ENCODE measurements at regions of chr2 and their contacts with region 1.

Region 1: GRCh38 chr2:202196727-202197126 is 41.7 kb downstream of the SUMO1 start:
- DNase-seq: no peak
- H3K4me3 ChIP-seq: no peak overlapping the region
- H3K27ac ChIP-seq: no peak overlapping the region
- H3K4me1 ChIP-seq: no peaks in the 10 kb centered on the region
- H3K27me3 ChIP-seq: no peaks in the 10 kb centered on the region
- CTCF ChIP-seq: no peak
- POLR2A ChIP-seq: no peak

Region 2: DNA sequence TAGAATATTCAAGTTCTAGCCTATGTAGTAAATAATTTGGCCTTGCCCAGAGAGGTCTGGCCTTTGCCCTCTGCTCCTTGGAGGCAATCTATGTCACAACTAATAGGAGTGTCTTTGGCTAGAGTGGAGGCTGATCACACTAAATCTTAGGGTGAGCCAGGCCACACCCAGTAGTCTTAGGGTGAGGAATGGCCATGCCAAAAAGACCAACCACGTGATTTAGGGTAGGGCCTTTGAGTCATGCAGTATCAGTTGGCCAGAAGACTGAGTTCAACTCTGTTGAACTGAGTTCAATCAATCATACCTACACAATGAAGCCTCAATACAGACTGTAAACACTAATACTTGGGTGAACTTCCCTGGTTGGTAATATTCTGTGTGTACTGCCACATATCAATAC is 813.6 kb before region 1 on chr2:
- intact Hi-C with region 1: no loop called
- DNase-seq: no peak
- H3K4me3 ChIP-seq: no peak overlapping the region
- H3K27ac ChIP-seq: no peak overlapping the region
- H3K4me1 ChIP-seq: no peaks in the 10 kb centered on the region
- H3K27me3 ChIP-seq: no peaks in the 10 kb centered on the region
- CTCF ChIP-seq: no peak
- POLR2A ChIP-seq: no peak

Region 3: DNA sequence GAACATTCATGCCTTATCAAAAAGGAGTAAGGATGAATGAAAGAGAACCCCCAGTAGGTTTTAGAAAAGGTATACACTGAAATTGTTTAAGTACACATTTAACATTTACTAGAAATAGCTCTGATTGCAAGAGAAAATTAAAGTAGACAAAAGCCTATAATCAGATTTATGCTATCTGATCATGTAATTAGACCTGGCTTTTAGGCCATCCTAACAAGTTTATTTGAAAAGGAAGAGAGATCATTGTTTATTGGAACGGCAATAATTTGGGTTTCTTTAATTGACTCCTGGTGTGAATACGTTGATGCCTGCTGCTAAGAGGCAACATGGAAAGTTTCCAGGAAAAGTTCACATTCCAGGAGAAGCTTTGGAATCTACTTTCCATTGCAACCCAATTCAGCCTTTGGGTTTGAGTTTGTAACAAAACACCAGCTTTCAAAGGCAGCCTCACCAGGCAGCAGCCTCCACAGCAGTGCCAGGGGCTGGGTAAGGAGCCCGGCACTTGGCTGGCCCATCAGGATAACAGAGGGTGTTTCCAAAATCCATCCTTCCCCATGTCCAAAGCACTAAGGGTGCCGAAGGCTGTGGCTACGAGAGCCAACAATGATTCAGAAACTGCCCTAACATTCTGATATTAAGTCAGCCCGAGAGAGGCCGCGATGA is 145.1 kb before region 1 on chr2:
- intact Hi-C with region 1: no loop called
- DNase-seq: peak in 1 of 2 donors; percentile 41
- H3K4me3 ChIP-seq: peak overlapping the region in 1 of 3 donors; percentile 5
- H3K27ac ChIP-seq: peak overlapping the region in 1 of 2 donors; percentile 61
- H3K4me1 ChIP-seq: no peaks in the 10 kb centered on the region
- H3K27me3 ChIP-seq: no peaks in the 10 kb centered on the region
- CTCF ChIP-seq: no peak
- POLR2A ChIP-seq: no peak

Region 4: DNA sequence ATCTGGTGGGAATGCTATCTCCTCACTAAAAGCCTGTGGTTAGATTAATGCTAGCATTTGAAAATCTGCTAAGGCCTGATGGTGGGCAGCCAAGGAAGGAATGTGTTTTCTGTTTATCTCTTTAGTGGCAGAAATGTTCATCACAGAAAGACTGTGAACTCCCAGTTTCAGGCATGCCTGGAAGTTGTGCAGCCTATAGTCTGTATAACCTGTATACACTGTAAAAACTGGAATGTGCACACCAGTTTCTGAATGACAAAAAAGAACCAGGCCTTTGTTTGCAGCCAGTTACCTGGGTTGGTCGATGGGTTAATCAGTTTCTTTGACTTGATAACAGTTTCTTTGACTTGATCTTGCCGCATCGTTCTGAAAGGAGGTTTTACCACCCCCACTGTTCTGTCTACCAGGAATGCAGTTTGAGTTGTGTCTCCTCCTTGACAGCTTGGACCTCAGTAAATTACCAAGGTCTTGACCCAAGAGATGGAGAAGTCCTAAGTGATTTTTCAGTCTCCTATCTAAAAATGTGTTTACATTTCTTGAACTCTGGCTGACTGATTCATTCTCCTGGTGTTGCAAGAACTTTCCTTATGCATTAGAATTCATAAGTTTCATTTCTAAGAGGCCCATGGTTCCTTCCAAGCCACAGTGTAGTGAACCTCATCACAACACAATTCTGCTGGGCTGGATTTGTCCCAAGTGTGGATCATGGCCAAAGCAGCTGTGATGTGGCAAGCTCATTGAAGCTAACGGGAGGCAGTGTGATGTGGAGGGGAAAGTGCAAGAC is 61.4 kb before region 1 on chr2:
- intact Hi-C with region 1: no loop called
- DNase-seq: peak in 1 of 2 donors; percentile 78
- H3K4me3 ChIP-seq: no peak overlapping the region
- H3K27ac ChIP-seq: peak overlapping the region in 1 of 2 donors; percentile 61
- H3K4me1 ChIP-seq: no peaks in the 10 kb centered on the region
- H3K27me3 ChIP-seq: no peaks in the 10 kb centered on the region
- CTCF ChIP-seq: no peak
- POLR2A ChIP-seq: no peak

Region 5: DNA sequence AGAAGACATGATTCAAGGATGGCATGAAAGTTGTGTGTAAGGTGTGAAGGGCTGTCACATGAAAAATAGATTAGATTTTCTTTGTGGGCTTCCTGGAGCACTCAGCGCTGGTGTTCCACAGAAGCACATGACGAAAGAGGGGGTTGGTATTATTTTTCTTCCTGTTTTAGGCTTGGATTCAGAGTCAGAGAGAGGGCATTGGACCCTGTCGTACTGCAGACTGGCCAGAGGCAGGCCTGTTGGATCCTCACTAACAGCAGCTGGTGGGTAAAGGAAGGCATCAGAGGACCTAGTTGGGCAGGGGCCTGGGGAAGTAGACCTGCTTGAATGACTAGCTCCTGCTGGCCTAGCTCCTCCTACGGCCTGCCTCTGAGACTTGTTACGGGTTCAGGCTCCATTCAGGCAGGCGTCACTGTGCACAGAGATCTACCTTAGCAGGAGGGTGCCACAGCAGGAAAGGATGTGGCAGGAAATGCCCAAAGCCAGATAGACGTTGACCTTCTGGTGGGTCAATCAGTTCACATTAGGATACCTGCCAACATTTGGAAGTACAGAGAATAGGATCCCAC is 1683.9 kb after region 1 on chr2:
- intact Hi-C with region 1: loop called (anchors 5 kb)
- DNase-seq: no peak
- H3K4me3 ChIP-seq: no peak overlapping the region
- H3K27ac ChIP-seq: no peak overlapping the region
- H3K4me1 ChIP-seq: no peaks in the 10 kb centered on the region
- H3K27me3 ChIP-seq: no peaks in the 10 kb centered on the region
- CTCF ChIP-seq: no peak
- POLR2A ChIP-seq: no peak

Measured in breast epithelium (tissue), 4 donors.